CD8-positive, alpha-beta memory T cell (primary cell): ENCODE measurements at regions of chr11 and their contacts with region 1.

Region 1: DNA sequence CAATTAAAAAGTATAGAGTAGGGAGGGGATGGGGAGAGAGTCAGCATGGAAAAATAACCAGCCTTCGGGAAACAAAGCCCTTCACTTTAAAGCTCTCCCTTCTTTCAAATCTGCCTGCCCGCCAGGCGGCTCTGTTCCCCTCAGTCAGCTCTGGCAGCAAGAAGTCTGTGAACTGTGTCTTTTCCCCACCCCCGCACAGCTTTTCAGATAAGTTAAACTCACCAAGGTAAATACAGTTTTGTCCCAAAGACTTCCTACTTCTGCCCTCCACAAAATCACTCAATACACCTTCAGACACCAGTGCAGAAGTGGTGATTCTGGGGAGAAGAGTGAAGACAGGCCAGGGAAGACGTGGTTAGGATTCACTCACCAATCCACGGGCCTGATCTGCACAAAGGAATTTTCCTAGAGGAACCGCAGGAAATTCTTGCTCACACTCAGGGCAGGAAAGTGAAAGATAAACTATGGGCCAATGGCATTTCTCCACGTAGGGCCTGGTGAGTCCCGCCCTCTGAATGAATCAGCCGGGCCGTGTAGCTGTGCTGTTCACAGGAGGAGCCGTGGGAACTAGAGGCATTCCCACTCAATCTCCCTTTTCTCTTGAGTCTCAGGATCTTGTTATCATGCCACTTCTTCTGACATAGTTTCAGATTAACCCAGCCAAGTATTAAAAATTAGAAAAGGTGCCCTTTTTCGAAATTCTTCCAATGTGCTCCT is at the start of gene TRIM5:
- DNase-seq: peak; percentile 65 to 86 (median 80)
- H3K4me3 ChIP-seq: peak within 1 kb of the TSS; percentile 72
- H3K4me3 Mint-ChIP-seq: peak within 1 kb of the TSS; percentile 89 to 98 (median 93)
- H3K27ac ChIP-seq: peak within 1 kb of the TSS; percentile 67
- H3K27ac Mint-ChIP-seq: peak within 1 kb of the TSS; percentile 88 to 100 (median 97)
- H3K4me1 ChIP-seq: peaks cover 24% of the 10 kb centered on the region
- H3K4me1 Mint-ChIP-seq: peaks cover 56 to 74% (median 73%) of the 10 kb centered on the region in 3 donors
- H3K27me3 ChIP-seq: no peaks in the 10 kb centered on the region
- H3K27me3 Mint-ChIP-seq: no peaks in the 10 kb centered on the region
- total RNA-seq, gene TRIM5: 8.2 to 10.6 TPM

Region 2: GRCh38 chr11:5600374-5600851 is 84.4 kb before region 1 on chr11:
- CTCF ChIA-PET with region 1: interaction called, 10 read pairs
- POLR2A ChIA-PET with region 1: no interaction called
- DNase-seq: peak; percentile 24 to 73 (median 42)
- H3K4me3 ChIP-seq: no peak overlapping the region
- H3K4me3 Mint-ChIP-seq: no peak overlapping the region
- H3K27ac ChIP-seq: no peak overlapping the region
- H3K27ac Mint-ChIP-seq: no peak overlapping the region
- H3K4me1 ChIP-seq: no peaks in the 10 kb centered on the region
- H3K4me1 Mint-ChIP-seq: peaks cover 5 to 13% (median 6%) of the 10 kb centered on the region in 3 donors
- H3K27me3 ChIP-seq: no peaks in the 10 kb centered on the region
- H3K27me3 Mint-ChIP-seq: peaks cover 12 to 19% of the 10 kb centered on the region in 2 donors

Region 3: DNA sequence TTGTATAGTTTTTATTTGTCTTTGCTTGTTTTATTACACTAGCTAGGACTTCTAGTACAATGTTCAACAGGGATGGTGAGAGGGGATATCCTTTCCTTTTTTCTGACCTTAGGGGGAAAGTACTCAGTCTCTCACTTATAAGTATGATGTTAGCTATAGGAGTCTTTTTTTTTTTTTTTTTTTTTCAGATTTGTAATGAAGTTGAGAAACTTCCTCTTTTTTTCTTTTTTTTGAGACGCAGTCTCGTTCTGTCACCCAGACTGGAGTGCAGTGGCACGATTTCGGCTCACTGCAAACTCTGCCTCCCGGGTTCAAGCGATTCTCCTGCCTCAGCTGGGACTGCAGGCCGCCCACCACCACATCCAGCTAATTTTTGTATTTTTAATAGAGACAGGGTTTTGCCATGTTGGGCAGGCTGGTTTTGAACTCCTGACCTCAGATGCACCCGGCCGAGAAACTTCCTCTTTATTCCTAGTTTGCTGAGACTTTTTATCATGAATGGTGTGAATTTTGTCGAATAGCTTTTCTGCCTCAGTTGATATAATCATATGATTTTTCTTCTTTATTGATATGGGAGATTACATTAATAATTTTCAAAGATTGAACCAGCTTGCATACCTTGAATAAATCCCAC is 15.7 kb after region 1 on chr11:
- CTCF ChIA-PET with region 1: interaction called, 12 read pairs
- POLR2A ChIA-PET with region 1: interaction called, 6 read pairs
- DNase-seq: no peak
- H3K4me3 ChIP-seq: no peak overlapping the region
- H3K4me3 Mint-ChIP-seq: peak overlapping the region in 2 of 7 donors; percentile 28 to 40
- H3K27ac ChIP-seq: no peak overlapping the region
- H3K27ac Mint-ChIP-seq: peak overlapping the region in 7 of 8 donors; percentile 3 to 71 (median 30)
- H3K4me1 ChIP-seq: peaks cover 25% of the 10 kb centered on the region
- H3K4me1 Mint-ChIP-seq: peaks cover 73 to 87% (median 83%) of the 10 kb centered on the region in 3 donors
- H3K27me3 ChIP-seq: no peaks in the 10 kb centered on the region
- H3K27me3 Mint-ChIP-seq: no peaks in the 10 kb centered on the region

Region 4: GRCh38 chr11:5712507-5712906 is 27.7 kb after region 1 on chr11:
- CTCF ChIA-PET with region 1: interaction called, 23 read pairs
- POLR2A ChIA-PET with region 1: interaction called, 3 read pairs
- DNase-seq: peak in 1 of 5 donors; percentile 15
- H3K4me3 ChIP-seq: no peak overlapping the region
- H3K4me3 Mint-ChIP-seq: no peak overlapping the region
- H3K27ac ChIP-seq: no peak overlapping the region
- H3K27ac Mint-ChIP-seq: peak overlapping the region in 3 of 8 donors; percentile 18 to 71 (median 57)
- H3K4me1 ChIP-seq: no peaks in the 10 kb centered on the region
- H3K4me1 Mint-ChIP-seq: no peaks in the 10 kb centered on the region
- H3K27me3 ChIP-seq: no peaks in the 10 kb centered on the region
- H3K27me3 Mint-ChIP-seq: no peaks in the 10 kb centered on the region

Region 5: GRCh38 chr11:5922749-5923426 is 238.1 kb after region 1 on chr11:
- CTCF ChIA-PET with region 1: no interaction called
- POLR2A ChIA-PET with region 1: no interaction called
- DNase-seq: no peak
- H3K4me3 ChIP-seq: no peak overlapping the region
- H3K4me3 Mint-ChIP-seq: no peak overlapping the region
- H3K27ac ChIP-seq: no peak overlapping the region
- H3K27ac Mint-ChIP-seq: no peak overlapping the region
- H3K4me1 ChIP-seq: no peaks in the 10 kb centered on the region
- H3K4me1 Mint-ChIP-seq: no peaks in the 10 kb centered on the region
- H3K27me3 ChIP-seq: no peaks in the 10 kb centered on the region
- H3K27me3 Mint-ChIP-seq: peaks cover 0 to 2% of the 10 kb centered on the region in 2 donors